WTC11 (cell line): ENCODE measurements at regions of chr12 and their contacts with region 1.

Region 1: GRCh38 chr12:49776413-49776812 is 35.1 kb downstream of the TMBIM6 start:
- DNase-seq: peak; percentile 72
- ATAC-seq: peak; percentile 89
- H3K4me3 Mint-ChIP-seq: no peak overlapping the region
- H3K27ac Mint-ChIP-seq: no peak overlapping the region
- H3K4me1 Mint-ChIP-seq: peaks cover 17% of the 10 kb centered on the region
- H3K27me3 Mint-ChIP-seq: peaks cover 20% of the 10 kb centered on the region
- CTCF ChIP-seq: peak; percentile 50

Region 2: GRCh38 chr12:49763006-49763591 is 13.3 kb before region 1 on chr12:
- CTCF ChIA-PET with region 1: interaction called, 10 read pairs
- POLR2A ChIA-PET with region 1: no interaction called
- DNase-seq: peak; percentile 88
- ATAC-seq: peak; percentile 80
- H3K4me3 Mint-ChIP-seq: no peak overlapping the region
- H3K27ac Mint-ChIP-seq: peak overlapping the region; percentile 39; the same call in 1 of the 2 replicates
- H3K4me1 Mint-ChIP-seq: peaks cover 7% of the 10 kb centered on the region
- H3K27me3 Mint-ChIP-seq: no peaks in the 10 kb centered on the region
- CTCF ChIP-seq: peak; percentile 75

Region 3: DNA sequence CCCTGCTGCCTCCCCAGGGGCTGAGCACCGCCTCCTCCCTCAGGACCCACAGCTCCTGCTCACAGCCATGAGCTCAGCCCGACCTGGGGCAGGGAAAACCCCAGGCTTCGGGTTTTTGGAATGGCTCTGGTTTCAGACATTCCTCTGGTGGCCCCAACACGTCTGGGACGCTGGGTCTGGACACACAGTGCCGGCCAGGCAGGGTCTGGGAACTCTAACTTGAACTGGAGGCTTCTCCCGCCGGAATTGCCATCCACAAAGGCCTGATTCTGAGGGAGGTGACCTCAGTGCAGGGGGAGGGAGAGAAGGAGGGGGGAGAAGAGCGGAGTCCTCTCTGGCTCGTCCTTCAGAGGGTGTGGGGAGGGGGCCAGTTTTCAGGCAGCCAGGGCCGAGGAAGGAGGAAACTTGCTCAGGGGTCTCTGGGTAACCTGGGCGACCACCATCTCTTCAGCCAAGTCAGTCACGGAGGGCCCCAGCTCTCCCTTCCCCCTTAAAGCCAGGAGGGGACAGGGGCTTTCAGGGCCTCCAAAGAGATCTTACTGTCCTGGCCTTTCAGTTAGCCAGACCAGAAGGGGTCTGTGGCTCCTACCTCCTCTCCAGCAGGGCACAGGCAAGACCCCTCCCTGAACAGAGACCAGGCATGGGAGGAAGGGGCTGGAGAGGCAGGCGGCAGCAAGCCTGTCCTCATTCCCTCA is 32.4 kb after region 1 on chr12:
- CTCF ChIA-PET with region 1: interaction called, 12 read pairs
- POLR2A ChIA-PET with region 1: interaction called, 4 read pairs
- DNase-seq: peak; percentile 36
- ATAC-seq: peak; percentile 9; the same call in 1 of the 2 replicates
- H3K4me3 Mint-ChIP-seq: no peak overlapping the region
- H3K27ac Mint-ChIP-seq: peak overlapping the region; percentile 90
- H3K4me1 Mint-ChIP-seq: peaks cover 42% of the 10 kb centered on the region
- H3K27me3 Mint-ChIP-seq: no peaks in the 10 kb centered on the region
- CTCF ChIP-seq: no peak

Region 4: DNA sequence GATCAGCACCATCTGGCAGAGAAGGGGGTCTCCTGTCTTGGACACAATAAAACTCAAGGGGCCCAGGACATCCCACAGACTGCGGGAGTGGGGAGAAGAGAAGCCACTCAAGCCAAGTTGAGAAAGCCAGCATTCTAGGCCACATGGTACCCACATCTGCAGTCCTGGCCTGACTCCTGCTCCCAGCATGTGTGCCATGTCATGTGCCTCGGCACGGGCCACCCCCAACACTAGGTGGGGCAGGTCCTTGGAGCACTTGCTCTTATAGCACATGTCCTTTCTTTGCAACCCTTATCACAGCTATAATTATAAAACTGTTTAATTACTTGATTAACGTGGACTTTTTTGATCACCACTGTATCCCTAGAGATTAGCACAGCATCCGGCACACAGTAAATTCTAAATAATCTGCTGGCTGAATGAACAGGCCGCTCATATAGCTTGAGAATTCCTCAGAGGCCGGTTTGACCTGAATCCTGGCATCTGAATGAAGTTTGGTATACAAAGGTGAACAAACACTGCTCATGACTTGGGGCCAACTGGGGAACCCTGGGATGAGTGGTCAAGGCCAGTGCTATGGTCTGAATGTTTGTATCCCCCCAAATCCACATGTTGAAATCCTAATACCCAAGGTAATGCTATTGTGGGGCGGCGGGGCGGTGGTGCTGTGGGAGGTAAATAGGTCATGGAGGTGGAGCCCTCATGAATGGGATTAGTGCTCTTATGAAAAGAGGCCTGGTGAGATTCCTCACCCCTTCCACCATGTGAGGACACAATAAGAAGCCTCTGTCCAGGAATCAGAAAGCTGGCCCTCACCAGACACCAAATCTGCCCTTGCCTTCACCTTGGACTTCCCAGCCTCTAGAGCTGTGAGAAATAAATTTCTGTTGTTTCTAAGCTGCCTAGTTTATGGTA is 45.2 kb after region 1 on chr12:
- CTCF ChIA-PET with region 1: interaction called, 33 read pairs
- POLR2A ChIA-PET with region 1: no interaction called
- DNase-seq: no peak
- ATAC-seq: no peak
- H3K4me3 Mint-ChIP-seq: no peak overlapping the region
- H3K27ac Mint-ChIP-seq: no peak overlapping the region
- H3K4me1 Mint-ChIP-seq: peaks cover 36% of the 10 kb centered on the region
- H3K27me3 Mint-ChIP-seq: no peaks in the 10 kb centered on the region
- CTCF ChIP-seq: no peak

Region 5: GRCh38 chr12:49828133-49829091 is 52.0 kb after region 1 on chr12 and contains the start of gene NCKAP5L:
- CTCF ChIA-PET with region 1: interaction called, 33 read pairs
- POLR2A ChIA-PET with region 1: interaction called, 4 read pairs
- DNase-seq: peak; percentile 97
- ATAC-seq: peak; percentile 89
- H3K4me3 Mint-ChIP-seq: peak within 1 kb of the TSS; percentile 93
- H3K27ac Mint-ChIP-seq: peak within 1 kb of the TSS; percentile 100
- H3K4me1 Mint-ChIP-seq: peaks cover 33% of the 10 kb centered on the region
- H3K27me3 Mint-ChIP-seq: no peaks in the 10 kb centered on the region; the same call in 1 of the 2 replicates
- CTCF ChIP-seq: no peak
- total RNA-seq, gene NCKAP5L: 22.1 to 27.8 TPM (median 22.4 TPM) in 3 replicates

Region 6: DNA sequence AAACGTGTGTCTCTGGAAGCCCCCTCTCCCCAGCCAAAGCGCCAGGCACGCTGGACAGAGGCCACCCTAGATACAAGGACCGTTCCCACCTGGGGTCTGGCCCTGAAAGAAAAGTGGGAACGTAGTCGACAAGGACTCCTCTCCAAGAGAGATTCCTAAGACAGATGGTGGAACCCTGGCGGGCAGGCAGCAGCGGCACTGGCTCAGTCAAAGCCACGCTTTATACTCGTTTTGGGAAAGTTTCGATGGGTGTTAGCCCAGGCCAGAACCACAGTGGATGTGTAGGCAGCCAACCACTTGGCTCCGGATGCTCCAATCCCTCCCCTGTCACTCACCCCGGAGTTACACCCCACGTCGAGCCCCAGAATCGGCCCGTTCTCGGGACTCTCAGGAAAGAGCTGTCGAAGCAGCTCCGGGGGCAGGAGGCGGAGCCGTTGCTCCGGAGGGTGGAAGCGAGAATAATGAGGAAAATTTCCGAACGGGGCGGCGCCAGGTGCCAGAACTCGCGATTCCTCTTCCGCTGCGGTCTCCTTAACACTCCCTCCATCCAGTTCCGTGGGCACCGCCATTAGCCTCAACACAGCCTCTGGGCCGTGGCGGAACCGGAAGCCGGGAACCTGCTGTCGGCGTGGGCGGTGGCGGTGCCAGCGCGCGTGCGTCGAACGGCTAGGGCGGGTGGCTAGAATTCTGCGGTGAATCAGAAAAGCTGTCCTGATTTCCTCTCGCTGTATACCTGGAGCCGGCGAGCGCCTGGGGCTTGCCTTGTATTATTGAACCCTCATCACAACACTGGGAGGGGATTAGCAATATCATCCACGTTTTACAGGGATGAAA is 66.3 kb after region 1 on chr12 and contains the start of gene BCDIN3D:
- CTCF ChIA-PET with region 1: interaction called, 31 read pairs
- POLR2A ChIA-PET with region 1: no interaction called
- DNase-seq: peak; percentile 79
- ATAC-seq: peak; percentile 82
- H3K4me3 Mint-ChIP-seq: peak within 1 kb of the TSS; percentile 92
- H3K27ac Mint-ChIP-seq: peak within 1 kb of the TSS; percentile 98
- H3K4me1 Mint-ChIP-seq: peaks cover 13% of the 10 kb centered on the region
- H3K27me3 Mint-ChIP-seq: peaks cover 23% of the 10 kb centered on the region
- CTCF ChIP-seq: no peak
- total RNA-seq, gene BCDIN3D: 1.6 to 3.2 TPM (median 2.4 TPM) in 3 replicates

Region 7: GRCh38 chr12:49903695-49904423 is 127.4 kb after region 1 on chr12 and contains the start of gene FAIM2:
- CTCF ChIA-PET with region 1: no interaction called
- POLR2A ChIA-PET with region 1: no interaction called
- DNase-seq: peak; percentile 54
- ATAC-seq: peak; percentile 38
- H3K4me3 Mint-ChIP-seq: peak within 1 kb of the TSS; percentile 66
- H3K27ac Mint-ChIP-seq: no peak within 1 kb of the TSS
- H3K4me1 Mint-ChIP-seq: peaks cover 8% of the 10 kb centered on the region
- H3K27me3 Mint-ChIP-seq: peaks cover 37% of the 10 kb centered on the region
- CTCF ChIP-seq: no peak
- total RNA-seq, gene FAIM2: 0.18 to 0.30 TPM (median 0.22 TPM) in 3 replicates